ENCODE measurements at regions of chr1 and their contacts with region 1.

Region 1: GRCh38 chr1:84143796-84144565 is at the start of gene PRKACB:
- DNase-seq: peak; percentile 87
- H3K4me3 ChIP-seq: peak within 1 kb of the TSS; percentile 38 to 99 (median 99)
- H3K27ac ChIP-seq: peak within 1 kb of the TSS; percentile 95
- H3K4me1 ChIP-seq: peaks cover 25% of the 10 kb centered on the region
- H3K27me3 ChIP-seq: no peaks in the 10 kb centered on the region
- CTCF ChIP-seq: no peak
- POLR2A ChIP-seq: peak; percentile 73
- total RNA-seq, gene PRKACB: 72.6 and 77.5 TPM in 2 replicates

Region 2: GRCh38 chr1:84174051-84174556 is 30.1 kb after region 1 on chr1:
- CTCF ChIA-PET with region 1: interaction called, 16 read pairs
- POLR2A ChIA-PET with region 1: interaction called, 6 read pairs
- dilution Hi-C with region 1: no loop called
- intact Hi-C with region 1: loop called (anchors 1 kb)
- DNase-seq: peak; percentile 88
- H3K4me3 ChIP-seq: peak overlapping the region in 1 of 3 experiments; percentile 48
- H3K27ac ChIP-seq: peak overlapping the region; percentile 100
- H3K4me1 ChIP-seq: peaks cover 64% of the 10 kb centered on the region
- H3K27me3 ChIP-seq: no peaks in the 10 kb centered on the region
- CTCF ChIP-seq: no peak
- POLR2A ChIP-seq: no peak

Region 3: DNA sequence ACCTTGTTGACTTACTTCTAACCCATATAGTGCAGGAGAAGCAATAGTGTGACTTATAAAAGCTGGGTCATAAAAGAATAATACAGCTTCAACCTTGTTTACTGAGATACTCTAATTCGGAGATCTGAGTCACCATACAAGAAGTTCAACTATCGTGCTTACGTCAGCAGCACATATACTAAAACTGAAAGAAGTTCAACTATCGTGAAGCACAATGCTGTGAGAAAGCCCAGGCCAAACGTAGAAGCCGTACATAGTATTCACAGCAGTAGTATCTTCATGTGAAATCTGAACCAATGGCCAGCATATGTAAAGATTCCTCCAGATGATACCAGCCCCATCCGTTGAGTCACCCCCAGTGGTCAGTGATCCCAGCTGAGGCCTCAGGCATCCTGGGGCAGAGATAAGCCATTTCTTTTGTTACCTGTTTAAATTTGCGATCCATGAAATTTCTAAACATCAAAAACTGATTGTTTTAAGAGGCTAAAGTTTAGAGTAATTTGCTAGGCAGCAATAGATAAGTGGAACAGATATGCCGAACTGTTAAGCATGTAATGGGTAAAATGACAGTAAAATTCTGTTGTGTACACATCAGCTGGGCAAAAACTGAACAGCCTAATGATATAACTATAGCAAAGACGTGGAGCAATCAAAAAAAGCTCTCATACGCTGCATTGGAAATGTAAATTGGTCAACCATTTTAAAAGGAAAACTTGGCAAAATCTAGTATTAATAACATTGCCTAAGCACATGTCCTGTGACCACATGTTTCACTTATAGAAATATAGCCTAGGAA is 103.6 kb after region 1 on chr1:
- CTCF ChIA-PET with region 1: interaction called, 5 read pairs
- POLR2A ChIA-PET with region 1: no interaction called
- dilution Hi-C with region 1: no loop called
- intact Hi-C with region 1: loop called (anchors 1 kb)
- DNase-seq: no peak
- H3K4me3 ChIP-seq: peak overlapping the region in 1 of 3 experiments; percentile 18
- H3K27ac ChIP-seq: peak overlapping the region; percentile 90
- H3K4me1 ChIP-seq: peaks cover 35% of the 10 kb centered on the region
- H3K27me3 ChIP-seq: no peaks in the 10 kb centered on the region
- CTCF ChIP-seq: no peak
- POLR2A ChIP-seq: no peak

Region 4: GRCh38 chr1:84260864-84261518 is 117.0 kb after region 1 on chr1:
- CTCF ChIA-PET with region 1: no interaction called
- POLR2A ChIA-PET with region 1: no interaction called
- dilution Hi-C with region 1: no loop called
- intact Hi-C with region 1: no loop called
- DNase-seq: no peak
- H3K4me3 ChIP-seq: no peak overlapping the region
- H3K27ac ChIP-seq: no peak overlapping the region
- H3K4me1 ChIP-seq: no peaks in the 10 kb centered on the region
- H3K27me3 ChIP-seq: no peaks in the 10 kb centered on the region
- CTCF ChIP-seq: no peak
- POLR2A ChIP-seq: no peak

Region 5: DNA sequence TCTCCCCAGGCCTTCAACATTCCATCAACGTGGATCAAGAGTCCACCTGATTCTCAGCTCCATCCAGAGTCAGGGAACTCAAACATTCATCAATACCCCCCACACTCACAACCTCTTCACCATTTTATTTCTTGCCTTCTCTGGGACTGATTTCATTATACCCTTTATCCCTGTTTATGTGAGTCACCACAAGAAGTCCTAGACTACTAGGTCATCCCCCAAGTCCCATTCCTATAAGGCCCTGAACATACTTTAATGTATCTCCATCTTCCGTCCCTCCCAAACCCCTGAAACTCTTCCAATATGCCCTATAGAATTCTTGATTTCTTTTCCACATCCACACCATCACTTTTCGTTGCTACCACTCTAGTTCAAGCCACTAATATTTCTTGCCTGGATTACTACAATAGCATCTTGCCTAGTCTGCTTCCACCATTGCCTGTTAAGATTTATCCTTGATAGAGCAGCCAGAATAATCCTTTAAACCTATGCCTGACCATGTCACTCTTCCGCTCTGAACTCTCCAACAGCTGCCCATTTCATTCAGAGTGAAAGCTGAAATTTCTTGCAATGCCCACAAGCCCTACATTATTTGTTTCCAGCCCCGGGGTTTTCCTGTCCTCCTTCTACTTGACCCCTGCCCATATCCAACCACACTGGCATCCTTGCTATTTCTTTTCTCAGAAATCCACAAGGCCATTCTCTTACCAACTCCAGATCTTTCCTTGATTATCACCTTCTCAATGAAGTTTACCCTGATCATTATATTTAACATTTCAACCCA is 148.1 kb after region 1 on chr1:
- CTCF ChIA-PET with region 1: no interaction called
- POLR2A ChIA-PET with region 1: no interaction called
- dilution Hi-C with region 1: no loop called
- intact Hi-C with region 1: no loop called
- DNase-seq: no peak
- H3K4me3 ChIP-seq: no peak overlapping the region
- H3K27ac ChIP-seq: no peak overlapping the region
- H3K4me1 ChIP-seq: peaks cover 3% of the 10 kb centered on the region
- H3K27me3 ChIP-seq: no peaks in the 10 kb centered on the region
- CTCF ChIP-seq: no peak
- POLR2A ChIP-seq: no peak

Region 6: DNA sequence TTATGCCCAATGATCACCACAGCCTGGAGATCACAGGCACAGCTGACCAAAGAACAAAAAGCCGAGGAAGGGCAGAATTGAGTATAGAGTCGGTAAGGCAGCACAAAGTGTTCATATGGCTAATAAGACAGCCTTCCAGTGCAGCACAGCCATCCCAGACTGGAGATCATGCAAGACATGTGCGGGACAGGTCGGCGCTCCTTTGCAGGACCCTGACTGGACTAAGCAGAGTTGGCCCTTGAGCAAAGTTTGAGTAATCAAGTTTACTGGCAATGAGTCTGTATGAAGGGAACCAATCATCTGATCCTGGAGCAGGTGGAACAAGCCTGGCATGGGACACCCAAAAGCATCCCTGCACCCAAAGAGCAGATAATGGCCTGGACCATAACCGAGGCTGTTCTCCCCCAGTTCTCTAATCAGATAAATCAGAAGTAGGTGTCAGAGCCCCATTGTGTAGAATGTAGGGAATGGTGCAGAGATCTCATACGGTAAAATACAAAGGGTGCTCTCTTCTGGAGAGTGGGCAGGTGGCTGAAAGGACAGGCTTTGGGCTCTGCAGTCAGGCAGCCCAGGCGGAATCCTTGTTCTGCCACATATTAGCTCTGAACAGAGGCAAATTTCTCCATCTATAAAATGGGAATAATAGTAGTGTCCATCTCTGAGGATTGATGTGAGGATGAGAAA is 243.6 kb after region 1 on chr1:
- CTCF ChIA-PET with region 1: interaction called, 9 read pairs
- POLR2A ChIA-PET with region 1: no interaction called
- dilution Hi-C with region 1: no loop called
- intact Hi-C with region 1: loop called (anchors 1 kb)
- DNase-seq: no peak
- H3K4me3 ChIP-seq: no peak overlapping the region
- H3K27ac ChIP-seq: no peak overlapping the region
- H3K4me1 ChIP-seq: peaks cover 4% of the 10 kb centered on the region
- H3K27me3 ChIP-seq: no peaks in the 10 kb centered on the region
- CTCF ChIP-seq: no peak
- POLR2A ChIP-seq: no peak

Region 7: GRCh38 chr1:84506002-84506728 is 362.2 kb after region 1 on chr1 and contains the starts of genes GNG5 and SPATA1:
- CTCF ChIA-PET with region 1: interaction called, 12 read pairs
- POLR2A ChIA-PET with region 1: interaction called, 12 read pairs
- dilution Hi-C with region 1: no loop called
- intact Hi-C with region 1: loop called (anchors 2 kb)
- DNase-seq: peak; percentile 97
- H3K4me3 ChIP-seq: peak within 1 kb of the TSS; percentile 55 to 89 (median 73)
- H3K27ac ChIP-seq: peak within 1 kb of the TSS; percentile 91
- H3K4me1 ChIP-seq: peaks cover 25% of the 10 kb centered on the region
- H3K27me3 ChIP-seq: no peaks in the 10 kb centered on the region
- CTCF ChIP-seq: no peak
- POLR2A ChIP-seq: peak; percentile 81
- total RNA-seq, gene GNG5: 172 and 175 TPM in 2 replicates
- total RNA-seq, gene SPATA1: 1.7 and 2.6 TPM in 2 replicates

Region 8: GRCh38 chr1:84753516-84754385 is 609.8 kb after region 1 on chr1:
- CTCF ChIA-PET with region 1: interaction called, 24 read pairs
- POLR2A ChIA-PET with region 1: no interaction called
- dilution Hi-C with region 1: no loop called
- intact Hi-C with region 1: loop called (anchors 1 kb)
- DNase-seq: peak; percentile 71
- H3K4me3 ChIP-seq: no peak overlapping the region
- H3K27ac ChIP-seq: no peak overlapping the region
- H3K4me1 ChIP-seq: no peaks in the 10 kb centered on the region
- H3K27me3 ChIP-seq: peaks cover 8 to 12% of the 10 kb centered on the region in 2 experiments
- CTCF ChIP-seq: peak; percentile 90 to 93
- POLR2A ChIP-seq: no peak